Natural killer cell (primary cell): ENCODE measurements at regions of chr17 and their contacts with region 1.

Region 1: DNA sequence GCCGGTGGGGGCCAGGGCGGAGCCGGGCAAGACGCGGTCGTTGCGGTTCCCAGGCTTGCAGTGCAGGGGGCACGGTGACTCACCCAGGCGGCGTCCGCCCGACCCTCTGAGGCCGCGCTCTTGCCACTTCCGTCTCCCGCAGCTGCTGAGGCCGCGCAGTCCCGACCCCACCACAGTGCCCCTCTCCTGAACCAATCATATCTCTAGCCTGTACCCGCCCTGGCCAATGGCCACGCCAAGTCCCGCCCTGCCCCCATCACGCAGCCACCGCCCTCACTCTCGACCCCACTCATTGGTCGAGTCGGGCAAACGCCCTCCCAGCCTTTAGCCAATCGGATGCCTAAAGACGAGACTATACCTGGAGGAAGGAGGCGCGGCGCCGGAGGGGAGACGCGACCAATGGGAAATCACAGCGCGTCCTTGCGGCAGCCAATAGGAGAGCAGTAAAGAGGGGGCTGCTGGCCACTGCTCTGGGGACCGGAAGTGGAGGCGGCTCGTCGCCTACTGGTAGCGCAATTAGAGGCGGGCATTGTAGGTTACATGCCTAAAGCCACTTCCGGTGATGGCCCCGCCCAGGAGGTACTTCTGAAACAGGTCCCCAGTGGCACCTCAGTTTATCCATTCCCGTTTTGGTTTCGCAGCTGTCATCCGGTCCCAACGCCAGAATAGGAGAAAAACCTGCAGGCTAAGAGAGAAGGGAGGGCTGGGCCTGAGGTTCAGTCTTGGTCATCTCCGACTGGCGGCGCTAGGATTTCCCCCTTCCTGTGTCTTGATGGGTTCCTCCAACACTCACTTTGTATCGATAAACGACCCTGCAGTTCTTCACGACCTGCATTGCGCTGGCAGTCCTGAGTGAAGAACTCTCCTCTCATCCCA is 3.5 kb upstream of the MTMR4 start:
- DNase-seq: peak; percentile 98 to 100
- ATAC-seq: peak; percentile 80 to 92 (median 81)
- H3K4me3 ChIP-seq: peak overlapping the region; percentile 68
- H3K4me3 Mint-ChIP-seq: peak overlapping the region; percentile 97
- H3K27ac ChIP-seq: peak overlapping the region; percentile 66
- H3K27ac Mint-ChIP-seq: peak overlapping the region; percentile 91 to 96
- H3K4me1 ChIP-seq: peaks cover 43% of the 10 kb centered on the region
- H3K4me1 Mint-ChIP-seq: peaks cover 45 to 55% of the 10 kb centered on the region in 2 donors
- H3K27me3 ChIP-seq: no peaks in the 10 kb centered on the region
- H3K27me3 Mint-ChIP-seq: peaks cover 0 to 3% of the 10 kb centered on the region in 2 donors
- CTCF ChIP-seq: no peak

Region 2: DNA sequence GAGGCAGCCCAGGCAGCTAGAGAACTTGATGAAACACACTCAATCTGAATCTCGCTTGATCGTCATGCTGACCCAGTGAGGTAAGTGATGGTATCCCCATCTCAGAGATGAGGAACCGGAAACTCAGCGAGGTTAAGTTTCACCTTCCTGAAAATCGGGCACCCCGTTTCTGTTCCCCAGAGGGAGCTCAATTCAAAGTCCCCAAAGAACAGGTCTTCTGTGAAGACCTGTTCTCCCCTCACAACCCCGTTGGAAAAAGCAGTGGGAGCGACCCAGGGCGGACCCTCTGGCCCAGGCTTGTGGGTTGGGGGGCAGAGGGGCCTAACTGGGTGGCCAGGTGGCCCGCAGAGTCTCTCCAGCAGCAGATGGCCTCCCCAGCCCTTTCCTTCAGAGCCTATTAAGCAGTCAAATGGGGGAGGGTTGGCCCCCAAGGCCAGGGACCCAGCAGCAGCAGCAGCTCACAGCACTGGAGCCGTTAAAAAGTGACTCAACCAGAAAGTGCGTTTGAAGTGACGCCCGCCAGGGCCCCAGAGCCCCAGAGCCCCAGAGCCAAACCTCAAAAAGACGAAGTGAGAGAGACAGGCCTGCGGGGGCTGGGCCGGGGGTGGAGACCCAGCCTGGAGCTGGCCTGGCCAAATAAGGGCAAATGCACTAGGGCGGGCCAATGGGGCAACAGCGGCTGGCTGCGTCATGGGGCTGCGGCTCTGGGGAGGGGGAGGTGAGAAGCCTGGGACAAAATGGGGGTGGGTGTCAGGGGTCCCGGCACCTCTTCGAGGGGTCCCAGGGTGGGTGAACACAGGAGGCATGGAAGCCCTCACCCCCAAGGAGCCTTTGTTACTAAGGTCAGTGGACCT is 180.1 kb before region 1 on chr17:
- intact Hi-C with region 1: loop called (anchors 5 kb)
- DNase-seq: peak; percentile 90 to 93
- ATAC-seq: peak; percentile 65 to 87 (median 78)
- H3K4me3 ChIP-seq: peak overlapping the region; percentile 94
- H3K4me3 Mint-ChIP-seq: peak overlapping the region; percentile 90
- H3K27ac ChIP-seq: peak overlapping the region; percentile 99
- H3K27ac Mint-ChIP-seq: peak overlapping the region; percentile 87 to 93
- H3K4me1 ChIP-seq: peaks cover 96% of the 10 kb centered on the region
- H3K4me1 Mint-ChIP-seq: peaks cover 89 to 91% of the 10 kb centered on the region in 2 donors
- H3K27me3 ChIP-seq: no peaks in the 10 kb centered on the region
- H3K27me3 Mint-ChIP-seq: no peaks in the 10 kb centered on the region
- CTCF ChIP-seq: no peak

Region 3: DNA sequence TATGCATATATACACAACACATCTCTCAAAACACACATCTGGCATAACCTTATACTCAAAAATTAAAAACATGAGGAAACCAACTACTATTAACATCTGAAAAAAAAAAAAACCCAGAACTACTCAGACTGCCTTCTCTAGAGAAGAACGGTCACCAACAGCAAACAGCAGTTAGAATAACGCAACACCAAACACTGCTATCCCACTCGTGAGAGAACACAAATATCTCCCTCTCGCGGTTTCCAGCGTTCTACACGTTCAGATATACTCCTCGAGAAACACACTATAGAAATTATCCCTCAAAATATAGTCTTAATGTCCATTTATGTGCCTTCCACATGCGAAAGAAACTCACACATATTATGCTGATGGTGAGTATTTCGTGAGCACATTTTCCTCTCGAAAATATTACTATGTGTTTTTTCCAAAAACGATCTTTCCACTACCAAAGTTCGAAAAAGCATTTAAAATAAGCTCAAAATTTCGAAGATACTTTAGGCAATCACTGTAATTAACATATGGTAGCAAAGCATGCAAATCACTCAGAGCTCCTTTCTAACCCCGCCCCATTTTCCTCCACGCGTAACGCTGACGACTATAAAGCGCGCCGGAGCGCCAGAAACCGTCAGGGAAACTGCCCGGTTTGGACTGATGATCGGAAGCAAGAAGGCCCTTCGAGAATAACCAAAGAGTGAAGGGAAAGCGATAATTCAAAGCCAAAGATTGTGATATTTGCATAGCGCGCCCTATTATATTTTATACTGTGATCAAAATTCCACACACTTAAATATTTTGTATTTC is 113.8 kb after region 1 on chr17:
- intact Hi-C with region 1: loop called (anchors 2 kb)
- DNase-seq: peak; percentile 96 to 97
- ATAC-seq: peak; percentile 82 to 92 (median 84)
- H3K4me3 ChIP-seq: peak overlapping the region; percentile 33
- H3K4me3 Mint-ChIP-seq: no peak overlapping the region
- H3K27ac ChIP-seq: peak overlapping the region; percentile 76
- H3K27ac Mint-ChIP-seq: no peak overlapping the region
- H3K4me1 ChIP-seq: peaks cover 10% of the 10 kb centered on the region
- H3K4me1 Mint-ChIP-seq: peaks cover 0 to 6% of the 10 kb centered on the region in 2 donors
- H3K27me3 ChIP-seq: no peaks in the 10 kb centered on the region
- H3K27me3 Mint-ChIP-seq: no peaks in the 10 kb centered on the region
- CTCF ChIP-seq: no peak

Region 4: DNA sequence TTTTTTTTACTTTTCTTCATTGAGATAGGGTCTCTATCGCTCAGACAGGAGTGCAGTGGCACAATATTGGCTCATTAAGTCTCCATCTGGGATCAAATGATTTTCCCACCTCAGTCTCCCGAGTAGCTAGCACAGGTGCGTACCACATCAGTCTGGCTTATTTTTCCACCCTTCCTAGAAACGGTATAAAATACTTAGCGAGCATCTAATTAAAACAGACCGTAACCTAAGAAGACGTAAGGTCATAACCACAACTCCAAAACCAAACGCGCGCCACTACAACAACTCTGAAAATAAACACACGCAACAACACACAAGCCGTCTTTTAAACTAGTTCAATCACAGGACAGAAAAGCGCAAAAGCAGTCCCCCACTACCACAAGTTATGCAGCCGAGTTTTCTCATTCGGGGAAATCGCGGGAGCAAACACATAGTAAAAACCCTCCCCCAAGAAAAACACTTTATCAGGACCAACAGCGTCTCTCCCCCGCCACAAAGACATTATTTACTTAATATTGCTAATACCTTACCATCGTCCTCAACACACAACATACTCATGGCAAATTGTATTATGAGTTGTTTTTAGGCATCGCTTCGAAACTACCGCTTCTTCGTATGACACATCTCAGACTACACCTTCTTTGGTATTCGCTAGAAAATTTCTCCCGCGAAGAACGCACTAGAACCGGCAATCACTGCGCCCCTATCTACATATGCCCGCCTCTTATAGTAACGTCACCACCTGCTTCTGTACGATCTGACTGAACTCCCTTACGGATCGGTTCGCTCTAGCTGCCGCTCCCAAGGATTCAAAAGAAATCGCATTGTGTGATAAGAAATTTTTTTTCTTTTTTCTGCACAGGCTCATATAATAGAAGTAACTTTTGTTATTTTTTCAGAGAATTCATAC is 141.1 kb after region 1 on chr17:
- intact Hi-C with region 1: loop called (anchors 1 kb)
- DNase-seq: peak; percentile 74 to 93
- ATAC-seq: peak; percentile 76 to 90 (median 83)
- H3K4me3 ChIP-seq: peak overlapping the region; percentile 43
- H3K4me3 Mint-ChIP-seq: peak overlapping the region; percentile 89
- H3K27ac ChIP-seq: peak overlapping the region; percentile 88
- H3K27ac Mint-ChIP-seq: peak overlapping the region; percentile 97 to 98
- H3K4me1 ChIP-seq: peaks cover 15% of the 10 kb centered on the region
- H3K4me1 Mint-ChIP-seq: peaks cover 18% of the 10 kb centered on the region in 2 donors
- H3K27me3 ChIP-seq: no peaks in the 10 kb centered on the region
- H3K27me3 Mint-ChIP-seq: peaks cover 0 to 3% of the 10 kb centered on the region in 2 donors
- CTCF ChIP-seq: no peak

Region 5: DNA sequence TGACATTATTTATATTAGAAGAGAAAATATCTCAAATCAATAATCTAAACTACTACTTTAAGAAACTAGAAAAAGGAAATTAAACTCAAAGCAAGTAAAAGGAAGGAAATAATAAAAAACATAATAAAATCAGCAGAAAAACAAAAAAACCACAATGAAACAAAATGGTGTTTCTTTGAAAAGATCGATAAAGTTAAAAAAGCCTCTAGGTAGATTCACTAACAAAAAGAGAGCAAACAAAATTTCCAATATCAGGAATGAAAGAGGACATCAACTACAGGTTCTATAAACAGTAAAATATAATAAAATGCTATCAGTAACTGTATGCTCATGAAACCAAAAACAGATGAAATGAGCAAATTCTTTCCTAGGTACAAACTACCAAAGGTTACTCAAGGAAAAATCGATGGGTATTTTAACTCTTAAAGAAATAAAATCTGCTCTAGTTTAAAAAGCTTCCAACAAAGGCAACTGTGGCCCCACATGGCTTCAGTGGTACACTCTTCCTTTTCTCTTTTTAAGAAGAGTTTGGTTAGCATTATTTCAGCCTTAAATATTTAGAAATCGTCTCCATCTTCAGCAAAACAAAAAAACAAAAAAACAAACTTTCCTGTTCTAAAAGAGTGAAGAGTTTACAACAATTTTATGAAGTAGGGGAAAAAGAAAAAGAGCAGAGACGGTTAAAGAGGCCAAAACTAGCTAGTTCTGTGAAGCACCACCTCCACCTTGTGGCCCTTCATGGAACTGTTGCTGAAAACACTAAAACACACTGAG is 486.6 kb after region 1 on chr17:
- intact Hi-C with region 1: loop called (anchors 1 kb)
- DNase-seq: peak; percentile 56 to 86
- ATAC-seq: peak; percentile 71 to 85 (median 78)
- H3K4me3 ChIP-seq: no peak overlapping the region
- H3K4me3 Mint-ChIP-seq: no peak overlapping the region
- H3K27ac ChIP-seq: no peak overlapping the region
- H3K27ac Mint-ChIP-seq: no peak overlapping the region
- H3K4me1 ChIP-seq: peaks cover 6% of the 10 kb centered on the region
- H3K4me1 Mint-ChIP-seq: no peaks in the 10 kb centered on the region
- H3K27me3 ChIP-seq: no peaks in the 10 kb centered on the region
- H3K27me3 Mint-ChIP-seq: no peaks in the 10 kb centered on the region
- CTCF ChIP-seq: peak; percentile 96

Region 6: DNA sequence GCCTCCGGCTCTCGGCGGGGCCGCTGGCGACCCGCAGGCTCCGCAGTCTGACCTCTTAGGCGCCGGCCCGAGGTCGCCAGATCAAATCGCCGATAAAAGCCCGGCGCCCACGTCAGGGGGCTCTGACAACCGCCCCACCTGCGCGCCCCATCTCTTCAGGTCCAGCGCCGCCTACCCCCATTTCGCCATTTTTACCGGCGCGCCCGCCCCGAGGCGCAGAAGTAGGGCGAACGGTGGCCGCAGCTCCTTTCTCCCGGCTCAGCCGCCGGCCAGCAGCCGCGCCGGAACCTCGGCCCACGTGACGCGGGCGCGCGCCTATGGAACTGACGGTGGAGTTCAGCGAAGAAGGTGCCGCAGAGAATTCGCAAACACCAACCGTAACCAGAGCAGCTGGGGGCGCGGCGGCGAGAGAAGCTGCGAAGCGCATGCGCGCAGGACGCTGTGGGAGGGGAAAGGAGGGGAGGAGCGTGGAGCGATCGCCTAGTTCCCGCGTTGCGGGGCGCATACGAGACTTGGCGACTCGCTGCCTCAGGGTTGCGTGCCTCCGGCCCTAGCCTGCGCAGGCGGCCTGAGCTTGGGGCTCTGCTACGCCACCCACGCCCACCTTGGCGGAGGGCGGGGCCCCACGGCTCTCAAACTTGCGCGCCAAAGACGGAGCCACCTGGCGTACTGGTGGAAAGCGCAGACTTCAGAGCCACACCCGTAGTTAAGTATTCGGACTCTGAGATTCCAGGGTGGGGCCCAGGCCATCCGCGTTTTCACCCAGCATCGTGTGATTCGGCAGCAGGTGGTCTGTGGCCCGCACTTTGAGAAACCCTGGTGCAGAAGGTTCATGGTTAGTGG is 588.7 kb after region 1 on chr17 and contains the start of gene TRIM37:
- intact Hi-C with region 1: loop called (anchors 5 kb)
- DNase-seq: peak; percentile 97 to 100
- ATAC-seq: peak; percentile 96 to 100 (median 97)
- H3K4me3 ChIP-seq: peak within 1 kb of the TSS; percentile 99
- H3K4me3 Mint-ChIP-seq: peak within 1 kb of the TSS; percentile 95
- H3K27ac ChIP-seq: peak within 1 kb of the TSS; percentile 90
- H3K27ac Mint-ChIP-seq: peak within 1 kb of the TSS; percentile 92 to 95
- H3K4me1 ChIP-seq: peaks cover 14% of the 10 kb centered on the region
- H3K4me1 Mint-ChIP-seq: peaks cover 24 to 29% of the 10 kb centered on the region in 2 donors
- H3K27me3 ChIP-seq: no peaks in the 10 kb centered on the region
- H3K27me3 Mint-ChIP-seq: no peaks in the 10 kb centered on the region
- CTCF ChIP-seq: no peak
- total RNA-seq, gene TRIM37: 20.4 to 26.1 (median 21.9) TPM

Region 7: DNA sequence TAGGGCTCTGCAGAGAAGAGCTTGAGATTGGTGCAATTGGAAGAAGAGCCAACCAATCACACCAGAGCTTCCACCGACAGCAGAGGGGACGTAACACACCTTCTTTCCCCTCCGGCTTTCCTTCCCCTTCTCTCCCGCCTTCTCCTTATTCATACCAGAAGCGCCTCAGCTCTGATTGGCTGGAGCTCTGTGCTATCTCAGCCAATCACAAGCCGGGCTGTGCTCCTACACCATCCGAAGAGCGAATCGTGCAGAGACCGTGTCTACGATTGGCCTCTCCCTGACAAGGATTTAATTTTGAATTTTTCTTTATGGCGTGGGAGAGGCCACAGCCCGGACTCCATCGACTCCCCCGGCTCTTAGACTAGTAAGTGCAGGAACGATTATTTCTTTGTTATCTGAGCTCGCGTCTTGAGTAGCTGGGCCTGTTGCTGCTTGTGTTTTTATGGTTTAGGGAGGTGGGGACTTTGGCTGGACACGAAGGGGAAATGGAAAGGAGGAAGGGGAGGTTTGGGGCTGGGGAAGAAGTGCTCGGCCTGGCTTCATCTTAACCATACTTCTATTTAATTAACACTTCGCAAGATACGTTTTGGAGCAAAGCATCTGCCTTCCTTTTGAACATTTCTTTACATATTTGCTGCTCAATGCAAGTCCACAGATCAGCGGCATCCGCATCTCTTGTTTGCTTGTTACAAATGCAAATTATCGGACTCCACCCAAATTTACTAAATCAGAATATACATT is 637.6 kb after region 1 on chr17 and contains the start of gene PRR11:
- intact Hi-C with region 1: loop called (anchors 2 kb)
- DNase-seq: peak; percentile 84 to 99
- ATAC-seq: peak; percentile 83 to 94 (median 85)
- H3K4me3 ChIP-seq: peak within 1 kb of the TSS; percentile 84
- H3K4me3 Mint-ChIP-seq: no peak within 1 kb of the TSS
- H3K27ac ChIP-seq: peak within 1 kb of the TSS; percentile 58
- H3K27ac Mint-ChIP-seq: no peak within 1 kb of the TSS
- H3K4me1 ChIP-seq: peaks cover 19% of the 10 kb centered on the region
- H3K4me1 Mint-ChIP-seq: peaks cover 14 to 15% of the 10 kb centered on the region in 2 donors
- H3K27me3 ChIP-seq: no peaks in the 10 kb centered on the region
- H3K27me3 Mint-ChIP-seq: no peaks in the 10 kb centered on the region
- CTCF ChIP-seq: no peak
- total RNA-seq, gene PRR11: 2.0 to 4.0 (median 2.9) TPM